KBM-7 (cell line): ENCODE measurements at regions of chr2 and their contacts with region 1.

Region 1: DNA sequence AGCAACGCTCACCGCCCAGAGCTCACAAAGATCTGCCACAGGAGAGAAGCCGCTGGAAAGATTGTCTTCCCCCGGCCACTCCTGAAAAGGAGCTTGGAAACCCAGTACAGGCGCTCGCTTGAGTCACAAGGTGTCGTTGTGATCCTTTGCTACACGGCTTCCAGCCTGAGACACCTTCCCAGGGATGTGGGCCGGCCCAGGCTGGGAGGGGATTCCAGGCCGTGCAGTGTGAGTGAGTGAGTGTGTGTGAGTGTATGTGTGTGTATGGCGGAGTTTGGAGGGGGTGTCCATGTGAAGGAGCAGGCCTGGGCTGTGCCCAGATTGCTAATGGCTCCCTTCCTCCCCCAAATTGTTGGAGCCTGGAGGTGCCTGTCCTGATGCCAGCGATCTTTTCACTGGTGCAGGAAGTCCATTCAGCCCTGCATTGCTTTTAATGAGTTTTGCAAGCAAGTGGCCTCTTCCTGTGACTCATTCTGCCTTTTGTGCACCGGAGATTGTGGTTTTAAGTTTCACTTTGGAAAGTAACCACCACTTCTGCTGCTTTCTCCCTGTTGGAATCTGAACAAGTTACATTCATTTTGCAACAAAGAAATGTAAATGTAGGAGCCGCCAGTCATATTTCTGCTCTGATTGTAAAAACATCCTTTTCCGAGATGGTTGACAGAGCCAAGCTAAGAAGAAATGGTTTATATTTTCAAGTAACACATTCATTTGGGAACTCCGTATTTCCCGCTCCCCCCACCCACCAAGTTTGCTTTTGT is 83.7 kb downstream of the LPIN1 start:
- DNase-seq: peak; percentile 94

Region 2: GRCh38 chr2:11124503-11125068 is 705.5 kb before region 1 on chr2:
- in situ Hi-C with region 1: no loop called
- DNase-seq: peak; percentile 74

Region 3: DNA sequence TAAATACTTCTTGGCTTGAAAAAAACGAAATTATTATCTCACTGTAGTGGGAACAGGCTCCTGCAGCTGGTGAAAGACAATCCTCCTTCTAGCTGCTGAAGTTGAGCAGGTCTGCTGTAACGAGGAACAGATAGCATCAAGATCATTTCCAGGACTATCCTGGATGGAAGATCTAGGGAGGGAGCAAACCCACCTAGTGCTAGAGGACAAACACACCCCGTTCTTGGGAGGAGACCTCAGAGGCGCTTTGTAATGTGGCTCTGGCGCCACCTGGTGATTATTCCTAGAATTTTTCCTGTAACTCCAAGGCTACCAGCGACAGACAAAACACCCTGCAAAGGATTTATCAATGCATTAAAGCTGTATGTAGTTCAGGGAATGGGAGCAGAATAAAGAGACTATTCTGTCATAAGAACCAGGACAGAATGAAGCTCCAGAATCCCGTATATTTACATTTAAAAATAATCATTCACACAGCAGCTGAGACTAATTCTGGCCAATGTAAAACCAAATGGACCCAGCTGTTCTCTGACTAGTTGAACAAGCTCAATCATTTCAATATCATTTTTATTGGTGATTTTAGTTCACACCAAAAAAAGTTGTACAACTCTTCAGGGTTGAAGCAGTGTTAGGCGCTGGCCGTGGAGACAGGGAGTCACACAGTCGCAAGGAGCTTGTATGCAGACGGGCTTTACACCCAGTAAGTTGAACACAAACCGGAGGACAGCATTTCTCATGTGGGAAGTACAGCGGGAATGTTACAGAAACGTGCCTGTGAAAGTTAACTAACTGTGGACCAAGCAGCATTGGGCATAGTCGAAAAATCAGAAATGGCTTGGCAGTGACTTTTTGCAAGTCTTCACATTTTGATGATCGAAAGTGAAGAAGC is 1176.9 kb after region 1 on chr2:
- in situ Hi-C with region 1: loop called (anchors 25 kb)
- DNase-seq: peak; percentile 77